Activated naive CD4-positive, alpha-beta T cell treated with anti-CD3 and anti-CD28 coated beads for 36 hours (primary cell): ENCODE measurements at regions of chr10 and their contacts with region 1.

Region 1: GRCh38 chr10:987870-988666 is at the start of gene GTPBP4:
- DNase-seq: peak; percentile 98
- H3K4me3 Mint-ChIP-seq: peak within 1 kb of the TSS; percentile 95
- H3K27ac Mint-ChIP-seq: peak within 1 kb of the TSS; percentile 86
- H3K4me1 Mint-ChIP-seq: peaks cover 38% of the 10 kb centered on the region
- H3K27me3 Mint-ChIP-seq: no peaks in the 10 kb centered on the region
- total RNA-seq, gene GTPBP4: 98.3 to 98.9 TPM

Region 2: GRCh38 chr10:135601-136464 is 852.2 kb before region 1 on chr10:
- CTCF ChIA-PET with region 1: no interaction called
- intact Hi-C with region 1: loop called (anchors 5 kb)
- DNase-seq: peak; percentile 72
- H3K4me3 Mint-ChIP-seq: peak overlapping the region; percentile 79
- H3K27ac Mint-ChIP-seq: peak overlapping the region; percentile 89
- H3K4me1 Mint-ChIP-seq: peaks cover 31% of the 10 kb centered on the region
- H3K27me3 Mint-ChIP-seq: no peaks in the 10 kb centered on the region

Region 3: DNA sequence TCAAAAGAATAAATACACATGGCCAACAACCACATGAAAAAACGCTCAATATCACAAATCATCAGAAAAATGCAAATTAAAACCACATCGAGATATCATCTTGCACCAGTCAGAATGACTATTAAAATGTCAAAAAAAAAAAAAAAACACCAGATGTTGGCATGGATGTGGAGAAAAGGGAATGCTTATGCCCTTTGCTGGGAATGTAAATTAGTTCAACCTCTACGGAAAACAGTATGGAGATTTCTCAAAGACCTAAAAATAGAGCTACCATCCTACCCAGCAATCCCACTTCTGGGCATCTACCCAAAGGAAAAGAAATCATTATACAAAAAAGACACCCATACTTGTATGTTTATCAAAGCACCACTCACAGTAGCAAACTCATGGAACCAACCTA is 253.6 kb before region 1 on chr10:
- CTCF ChIA-PET with region 1: no interaction called
- intact Hi-C with region 1: no loop called
- DNase-seq: no peak
- H3K4me3 Mint-ChIP-seq: no peak overlapping the region
- H3K27ac Mint-ChIP-seq: no peak overlapping the region
- H3K4me1 Mint-ChIP-seq: no peaks in the 10 kb centered on the region
- H3K27me3 Mint-ChIP-seq: peaks cover 10% of the 10 kb centered on the region

Region 4: DNA sequence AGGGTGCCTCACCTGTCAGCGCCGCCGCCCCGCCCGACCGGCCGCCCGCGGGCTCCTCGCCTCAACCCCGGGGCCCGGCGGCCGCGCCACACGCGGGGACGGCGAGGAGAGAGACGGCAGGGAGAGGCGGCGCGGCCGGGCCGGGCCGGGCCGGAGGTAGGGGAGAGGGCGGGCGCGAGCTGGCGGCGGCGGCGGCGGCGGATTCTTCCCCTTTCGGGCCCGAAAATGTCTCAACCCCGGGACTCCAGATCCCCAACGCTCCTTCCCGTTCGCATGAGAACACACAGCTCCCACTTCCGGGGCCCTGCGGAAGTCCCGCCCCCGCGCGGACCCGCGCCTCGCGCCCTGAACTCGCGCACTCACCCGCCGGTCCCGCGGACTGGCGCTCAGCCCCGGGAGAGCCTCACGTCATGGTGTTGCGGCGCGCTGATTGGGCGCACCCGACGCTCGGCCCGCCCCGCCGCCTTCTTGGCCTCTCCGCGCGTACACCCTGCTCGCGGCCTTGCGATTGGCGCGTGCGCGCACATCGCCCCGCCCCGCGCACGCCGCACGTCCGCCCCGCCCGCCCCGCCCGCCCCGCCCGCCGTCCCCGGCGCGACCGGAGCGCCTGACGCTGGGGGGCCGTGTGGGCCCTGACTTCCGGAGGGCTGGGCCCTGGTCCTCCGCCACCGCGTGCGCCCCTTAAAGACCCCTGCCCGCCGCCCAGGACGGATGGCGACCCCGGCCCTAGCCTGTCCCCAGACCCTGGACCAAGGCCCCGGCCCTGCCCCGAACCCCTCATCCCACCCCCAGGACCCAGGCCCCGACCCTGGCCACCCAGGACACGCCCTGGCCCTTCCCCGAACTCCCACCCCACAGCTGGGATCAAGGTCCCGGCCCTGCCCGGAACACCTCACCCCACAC is 56.4 kb before region 1 on chr10 and contains the start of gene LARP4B:
- CTCF ChIA-PET with region 1: no interaction called
- intact Hi-C with region 1: loop called (anchors 1 kb)
- DNase-seq: peak; percentile 96
- H3K4me3 Mint-ChIP-seq: peak within 1 kb of the TSS; percentile 84
- H3K27ac Mint-ChIP-seq: peak within 1 kb of the TSS; percentile 83
- H3K4me1 Mint-ChIP-seq: peaks cover 28% of the 10 kb centered on the region
- H3K27me3 Mint-ChIP-seq: no peaks in the 10 kb centered on the region
- total RNA-seq, gene LARP4B: 66.7 to 69.3 TPM

Region 5: DNA sequence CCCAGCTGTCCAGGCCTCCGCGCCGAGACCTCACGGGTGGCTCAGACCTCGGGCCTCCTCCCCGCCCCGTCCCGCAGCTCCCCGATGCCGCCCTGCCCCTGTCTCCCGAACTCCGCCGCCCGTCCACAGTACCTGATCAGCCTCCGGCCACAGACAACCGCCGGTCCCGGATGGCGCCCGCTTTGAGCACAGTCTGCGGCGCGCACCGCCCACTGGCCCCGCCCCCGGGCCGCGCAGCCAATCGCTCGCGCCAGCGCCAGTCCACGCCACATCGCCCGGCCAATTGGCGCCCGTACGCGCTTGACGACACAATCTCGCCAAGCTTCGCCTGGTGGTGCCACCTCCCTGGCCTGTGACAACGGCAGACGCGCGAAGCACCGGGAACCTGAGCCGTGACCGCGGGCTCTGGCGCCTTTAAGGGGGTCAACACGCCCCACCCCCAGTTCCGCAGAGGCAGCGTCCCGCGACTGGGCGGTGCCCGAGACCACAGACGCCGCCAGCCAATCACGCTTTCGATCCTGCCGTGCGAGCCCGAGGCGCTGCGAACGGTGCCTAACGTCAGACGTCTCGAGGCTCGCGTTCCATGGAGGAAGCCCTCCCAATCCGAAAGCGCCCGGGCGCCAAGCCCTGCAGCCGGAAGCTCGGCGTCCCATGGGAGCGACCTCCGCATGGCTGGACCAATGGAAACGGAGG is 60.8 kb after region 1 on chr10 and contains the start of gene IDI1:
- CTCF ChIA-PET with region 1: interaction called, 3 read pairs
- intact Hi-C with region 1: loop called (anchors 1 kb)
- DNase-seq: peak; percentile 98
- H3K4me3 Mint-ChIP-seq: peak within 1 kb of the TSS; percentile 94
- H3K27ac Mint-ChIP-seq: peak within 1 kb of the TSS; percentile 97
- H3K4me1 Mint-ChIP-seq: peaks cover 66% of the 10 kb centered on the region
- H3K27me3 Mint-ChIP-seq: no peaks in the 10 kb centered on the region
- total RNA-seq, gene IDI1: 68.2 to 68.5 TPM

Region 6: GRCh38 chr10:1056326-1057105 is 68.4 kb after region 1 on chr10 and contains the start of gene WDR37:
- CTCF ChIA-PET with region 1: interaction called, 3 read pairs
- intact Hi-C with region 1: loop called (anchors 2 kb)
- DNase-seq: peak; percentile 86
- H3K4me3 Mint-ChIP-seq: peak within 1 kb of the TSS; percentile 99
- H3K27ac Mint-ChIP-seq: peak within 1 kb of the TSS; percentile 90
- H3K4me1 Mint-ChIP-seq: peaks cover 79% of the 10 kb centered on the region
- H3K27me3 Mint-ChIP-seq: no peaks in the 10 kb centered on the region
- total RNA-seq, gene WDR37: 14.0 to 16.0 TPM